ENCODE measurements at regions of chr3 and their contacts with region 1.

Region 1: GRCh38 chr3:25782938-25783660 is at the start of gene NGLY1:
- DNase-seq: peak; percentile 82
- H3K4me3 Mint-ChIP-seq: peak within 1 kb of the TSS; percentile 87
- H3K27ac Mint-ChIP-seq: peak within 1 kb of the TSS; percentile 83
- H3K4me1 Mint-ChIP-seq: peaks cover 54% of the 10 kb centered on the region
- H3K27me3 Mint-ChIP-seq: no peaks in the 10 kb centered on the region
- total RNA-seq, gene NGLY1: 71.6 and 78.8 TPM in 2 replicates

Region 2: GRCh38 chr3:25768851-25769250 is 14.2 kb before region 1 on chr3:
- intact Hi-C with region 1: no loop called
- DNase-seq: no peak
- H3K4me3 Mint-ChIP-seq: no peak overlapping the region
- H3K27ac Mint-ChIP-seq: no peak overlapping the region
- H3K4me1 Mint-ChIP-seq: peaks cover 13% of the 10 kb centered on the region
- H3K27me3 Mint-ChIP-seq: no peaks in the 10 kb centered on the region

Region 3: GRCh38 chr3:25817107-25817506 is 34.0 kb after region 1 on chr3:
- intact Hi-C with region 1: loop called (anchors 5 kb)
- DNase-seq: no peak
- H3K4me3 Mint-ChIP-seq: no peak overlapping the region
- H3K27ac Mint-ChIP-seq: no peak overlapping the region
- H3K4me1 Mint-ChIP-seq: peaks cover 16% of the 10 kb centered on the region
- H3K27me3 Mint-ChIP-seq: peaks cover 20% of the 10 kb centered on the region

Region 4: DNA sequence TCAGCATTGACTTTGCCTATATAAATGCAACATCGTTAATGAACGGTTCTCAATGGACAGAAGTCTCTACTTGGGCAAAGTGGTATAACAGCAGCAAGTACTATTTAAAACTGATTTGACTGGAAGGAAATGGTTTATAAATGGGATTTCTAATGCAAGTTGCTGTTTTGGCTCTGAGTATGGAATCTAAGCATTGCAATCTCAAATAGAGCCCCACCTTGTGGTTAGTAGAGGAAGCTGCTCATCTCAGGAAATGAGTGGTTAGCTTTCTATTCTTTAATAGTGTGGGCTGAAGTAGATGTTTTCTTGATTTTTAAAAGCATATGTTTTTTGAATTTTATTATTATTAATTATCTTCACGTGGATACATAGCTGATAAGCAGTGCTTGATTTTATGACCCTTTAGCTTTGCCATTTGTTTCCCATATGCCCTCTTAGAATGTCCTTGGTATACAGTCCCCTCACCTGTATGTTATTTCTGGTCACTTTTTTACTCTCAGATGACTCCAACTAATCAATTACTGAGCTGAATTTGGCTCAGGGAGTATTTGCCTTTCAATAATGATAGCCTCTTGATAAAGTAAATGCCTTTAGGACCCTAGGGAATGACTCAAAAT is 73.9 kb after region 1 on chr3:
- intact Hi-C with region 1: loop called (anchors 2 kb)
- DNase-seq: no peak
- H3K4me3 Mint-ChIP-seq: no peak overlapping the region
- H3K27ac Mint-ChIP-seq: no peak overlapping the region
- H3K4me1 Mint-ChIP-seq: peaks cover 6% of the 10 kb centered on the region
- H3K27me3 Mint-ChIP-seq: no peaks in the 10 kb centered on the region